ENCODE measurements at regions of chr7 and their contacts with region 1.

Region 1: DNA sequence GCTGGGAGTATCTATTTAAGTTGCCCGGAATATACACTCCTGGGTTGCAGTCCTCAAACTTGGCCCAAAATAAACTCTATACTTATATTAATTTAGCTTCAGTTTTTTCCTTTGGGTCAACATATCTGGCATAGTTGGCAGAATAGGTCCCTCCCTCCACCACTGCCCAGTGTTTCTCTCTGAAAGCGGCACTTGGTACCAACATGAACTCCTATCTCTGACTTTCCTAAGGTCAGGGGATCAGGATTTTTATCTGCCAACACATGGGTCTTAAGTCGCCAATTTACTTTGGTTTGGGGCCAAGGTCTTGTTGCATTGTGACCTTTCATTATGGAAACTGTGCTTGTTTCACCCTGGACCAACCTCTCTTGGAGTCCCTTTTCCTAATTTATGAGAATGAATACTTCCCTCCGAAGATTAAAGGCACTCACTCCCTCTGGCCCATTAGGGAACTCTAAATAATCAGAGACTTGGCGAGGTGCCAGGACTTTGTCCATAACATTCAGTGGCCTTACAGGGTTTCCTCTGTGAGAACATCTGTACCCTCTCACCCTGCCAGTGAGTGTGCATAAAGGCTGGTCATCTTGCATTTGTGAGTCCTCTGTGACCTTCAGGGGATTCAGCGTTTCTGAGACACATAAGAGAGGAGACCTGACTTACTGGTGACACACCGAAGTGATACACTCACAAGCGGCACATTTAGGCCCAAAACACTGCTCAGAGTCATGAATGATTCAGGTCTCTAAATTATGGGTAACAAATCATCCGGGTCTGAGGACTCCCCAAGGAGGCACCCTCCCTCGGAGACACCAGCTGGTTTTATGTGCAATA is 19.7 kb upstream of the FKBP9 start:
- DNase-seq: peak; percentile 76
- ATAC-seq: peak; percentile 14 to 24

Region 2: GRCh38 chr7:32774541-32774951 is 163.0 kb before region 1 on chr7:
- intact Hi-C with region 1: no loop called
- DNase-seq: no peak
- ATAC-seq: no peak

Region 3: DNA sequence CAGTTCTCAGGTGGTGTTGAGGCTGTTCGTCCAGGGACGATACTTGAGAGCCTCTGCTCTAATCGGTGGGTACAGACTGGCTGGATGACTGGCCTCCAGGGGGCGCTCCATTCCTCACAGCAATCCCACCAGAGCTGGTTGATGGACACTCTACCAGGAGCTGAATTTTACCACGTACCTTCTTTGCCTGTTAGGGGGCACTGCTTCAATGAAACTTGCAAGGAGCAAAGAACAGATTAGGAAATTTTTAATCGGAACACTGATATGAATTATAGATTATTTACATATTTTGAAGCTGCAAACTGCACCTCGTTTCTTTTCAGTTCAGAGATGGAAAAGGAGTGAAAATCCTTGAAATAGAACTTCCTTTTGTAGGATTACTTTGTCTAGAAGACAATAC is 90.9 kb before region 1 on chr7:
- intact Hi-C with region 1: no loop called
- DNase-seq: peak; percentile 89
- ATAC-seq: peak; percentile 99 to 100

Region 4: DNA sequence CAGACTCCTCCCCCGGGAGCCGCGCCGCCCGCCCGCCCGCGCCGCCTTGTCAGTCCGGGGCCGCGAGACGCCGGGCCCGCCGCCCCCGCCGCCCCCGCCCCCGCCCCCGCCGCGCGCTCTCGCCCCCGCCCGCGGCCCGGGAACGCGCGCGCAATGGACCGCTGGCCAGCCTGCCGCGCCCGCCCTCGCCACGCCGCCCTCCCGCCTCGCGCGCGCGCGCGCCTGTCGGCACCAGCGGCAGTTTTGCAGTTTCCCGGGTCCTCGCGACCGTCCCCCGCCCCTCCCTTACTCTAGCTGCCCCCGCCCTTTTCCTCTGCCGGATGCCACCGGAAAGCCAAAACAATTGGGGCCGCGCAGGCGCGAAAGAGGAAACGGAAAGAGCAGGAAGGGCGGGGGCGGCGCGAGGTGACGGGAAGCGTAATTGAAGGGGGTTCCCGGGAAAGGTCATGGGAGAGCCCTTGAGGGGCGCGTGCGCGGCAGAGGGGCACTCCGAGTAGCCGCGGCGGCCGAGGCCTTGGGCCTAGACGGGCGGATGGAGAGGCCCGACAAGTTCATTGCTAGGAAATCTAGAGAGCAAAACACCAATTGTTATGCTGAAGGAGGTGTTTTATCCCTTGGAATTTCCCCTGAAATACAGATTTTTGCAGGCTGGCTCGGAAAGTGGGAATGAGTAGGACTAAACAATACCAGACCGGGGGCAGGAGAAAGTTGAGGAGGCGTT is 45.6 kb before region 1 on chr7:
- intact Hi-C with region 1: loop called in 1 of 2 experiments (anchors 5 kb)
- DNase-seq: peak; percentile 99
- ATAC-seq: peak; percentile 87 to 89

Measured in left cardiac atrium (tissue), 4 donors.